K562 (cell line): ENCODE measurements at regions of chr7 and their contacts with region 1.

Region 1: DNA sequence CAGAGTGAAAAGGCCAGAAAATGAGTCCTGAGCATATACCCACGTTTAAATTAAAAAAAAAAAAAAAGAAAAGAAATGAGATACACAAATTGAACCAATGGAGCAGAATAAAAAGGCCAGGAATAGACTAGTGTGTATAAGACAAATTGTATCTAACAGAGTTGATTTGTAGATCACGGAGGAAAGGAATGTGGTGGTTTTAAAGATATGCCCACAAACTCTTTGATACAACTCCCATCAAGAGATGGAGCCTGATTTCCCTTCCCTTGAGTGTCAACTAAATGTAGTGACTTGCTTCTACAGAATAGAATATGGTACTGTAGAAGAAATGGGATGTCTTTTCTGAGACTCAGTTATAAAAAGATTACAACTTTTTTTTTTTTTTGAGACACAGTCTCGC is 10.4 kb downstream of the SYPL1 start:
- DNase-seq: no peak
- ATAC-seq: no peak
- H3K4me3 ChIP-seq: no peak overlapping the region
- H3K27ac ChIP-seq: no peak overlapping the region
- H3K4me1 ChIP-seq: peaks cover 5 to 24% of the 10 kb centered on the region in 2 experiments; a peak in 4 of 5 replicates
- H3K27me3 ChIP-seq: no peaks in the 10 kb centered on the region
- CTCF ChIP-seq: no peak
- EP300 ChIP-seq: no peak
- POLR2A ChIP-seq: no peak
- RAD21 ChIP-seq: no peak

Region 2: GRCh38 chr7:106112117-106112971 is 10.6 kb after region 1 on chr7 and contains the start of gene SYPL1:
- CTCF ChIA-PET with region 1: no interaction called
- POLR2A ChIA-PET with region 1: interaction called, 24 read pairs
- in situ Hi-C with region 1: no loop called
- intact Hi-C with region 1: no loop called
- DNase-seq: peak; percentile 96 to 98 (median 97)
- ATAC-seq: peak; percentile 93
- H3K4me3 ChIP-seq: peak within 1 kb of the TSS; percentile 79
- H3K27ac ChIP-seq: peak within 1 kb of the TSS; percentile 92
- H3K4me1 ChIP-seq: peaks cover 14 to 19% of the 10 kb centered on the region in 2 experiments
- H3K27me3 ChIP-seq: no peaks in the 10 kb centered on the region
- CTCF ChIP-seq: peak in 2 of 3 experiments; percentile 11 to 54; a peak in 3 of 6 replicates
- EP300 ChIP-seq: peak; percentile 27; the same call in 1 of the 2 replicates
- POLR2A ChIP-seq: peak; percentile 86
- RAD21 ChIP-seq: no peak; a peak in 2 of 4 replicates
- polyA plus RNA-seq, gene SYPL1: 171 to 214 TPM